Endothelial cell of umbilical vein (primary cell): ENCODE measurements at regions of chr10 and their contacts with region 1.

Region 1: GRCh38 chr10:32149252-32149955 is 93.2 kb upstream of the KIF5B start:
- DNase-seq: peak; percentile 72
- H3K4me3 ChIP-seq: no peak overlapping the region
- H3K27ac ChIP-seq: peak overlapping the region; percentile 41
- H3K4me1 ChIP-seq: peaks cover 21% of the 10 kb centered on the region
- H3K27me3 ChIP-seq: no peaks in the 10 kb centered on the region
- CTCF ChIP-seq: no peak
- POLR2A ChIP-seq: no peak

Region 2: GRCh38 chr10:32131388-32131787 is 18.0 kb before region 1 on chr10:
- CTCF ChIA-PET with region 1: no interaction called
- POLR2A ChIA-PET with region 1: no interaction called
- dilution Hi-C with region 1: no loop called
- intact Hi-C with region 1: loop called (anchors 1 kb)
- DNase-seq: peak; percentile 74
- H3K4me3 ChIP-seq: no peak overlapping the region
- H3K27ac ChIP-seq: peak overlapping the region; percentile 69
- H3K4me1 ChIP-seq: peaks cover 16% of the 10 kb centered on the region
- H3K27me3 ChIP-seq: peaks cover 0 to 2% of the 10 kb centered on the region in 2 experiments
- CTCF ChIP-seq: no peak
- POLR2A ChIP-seq: no peak